A673 (cell line): ENCODE measurements at regions of chr10 and their contacts with region 1.

Region 1: GRCh38 chr10:92880233-92880861 is 32.0 kb downstream of the EXOC6 start:
- DNase-seq: peak; percentile 78
- H3K4me3 ChIP-seq: no peak overlapping the region
- H3K27ac ChIP-seq: no peak overlapping the region
- H3K4me1 ChIP-seq: peaks cover 21% of the 10 kb centered on the region
- H3K27me3 ChIP-seq: no peaks in the 10 kb centered on the region
- CTCF ChIP-seq: peak; percentile 71

Region 2: GRCh38 chr10:92523639-92524038 is 356.7 kb before region 1 on chr10:
- CTCF ChIA-PET with region 1: no interaction called
- POLR2A ChIA-PET with region 1: no interaction called
- intact Hi-C with region 1: loop called (anchors 5 kb)
- DNase-seq: no peak
- H3K4me3 ChIP-seq: no peak overlapping the region
- H3K27ac ChIP-seq: no peak overlapping the region
- H3K4me1 ChIP-seq: no peaks in the 10 kb centered on the region
- H3K27me3 ChIP-seq: no peaks in the 10 kb centered on the region
- CTCF ChIP-seq: no peak

Region 3: GRCh38 chr10:92644921-92645320 is 235.4 kb before region 1 on chr10:
- CTCF ChIA-PET with region 1: no interaction called
- POLR2A ChIA-PET with region 1: no interaction called
- intact Hi-C with region 1: loop called (anchors 5 kb)
- DNase-seq: no peak
- H3K4me3 ChIP-seq: no peak overlapping the region
- H3K27ac ChIP-seq: no peak overlapping the region
- H3K4me1 ChIP-seq: peaks cover 3% of the 10 kb centered on the region
- H3K27me3 ChIP-seq: no peaks in the 10 kb centered on the region
- CTCF ChIP-seq: no peak

Region 4: DNA sequence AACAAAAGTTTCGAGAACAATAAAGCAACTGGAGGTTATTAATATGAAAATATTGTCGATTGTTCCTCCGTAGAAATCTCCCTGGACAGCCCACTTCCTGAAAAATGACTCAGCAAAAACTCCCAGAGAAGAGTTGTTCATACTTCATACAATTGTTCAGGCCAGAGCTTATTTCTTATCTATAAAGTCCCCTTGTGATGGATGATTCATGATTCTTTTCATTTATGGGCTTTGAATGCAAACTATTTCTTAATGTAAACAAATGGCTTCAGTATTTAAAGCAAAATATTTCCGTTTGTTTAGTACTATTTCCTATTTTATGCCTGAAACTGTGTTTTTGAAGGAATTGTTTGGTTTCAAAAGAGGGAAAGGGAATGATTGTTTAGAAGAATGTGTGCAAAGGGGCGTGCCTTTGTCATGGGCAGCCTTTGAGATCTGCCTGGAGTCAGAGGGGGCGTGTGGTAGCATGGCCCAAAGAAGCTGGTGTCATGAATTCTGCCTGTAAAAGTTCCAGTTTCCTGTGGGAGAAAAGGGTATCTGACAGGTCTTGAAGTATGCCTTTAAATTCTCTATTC is 58.2 kb before region 1 on chr10:
- CTCF ChIA-PET with region 1: no interaction called
- POLR2A ChIA-PET with region 1: no interaction called
- intact Hi-C with region 1: loop called (anchors 2 kb)
- DNase-seq: peak; percentile 85
- H3K4me3 ChIP-seq: no peak overlapping the region
- H3K27ac ChIP-seq: peak overlapping the region; percentile 83
- H3K4me1 ChIP-seq: peaks cover 17% of the 10 kb centered on the region
- H3K27me3 ChIP-seq: no peaks in the 10 kb centered on the region
- CTCF ChIP-seq: no peak

Region 5: DNA sequence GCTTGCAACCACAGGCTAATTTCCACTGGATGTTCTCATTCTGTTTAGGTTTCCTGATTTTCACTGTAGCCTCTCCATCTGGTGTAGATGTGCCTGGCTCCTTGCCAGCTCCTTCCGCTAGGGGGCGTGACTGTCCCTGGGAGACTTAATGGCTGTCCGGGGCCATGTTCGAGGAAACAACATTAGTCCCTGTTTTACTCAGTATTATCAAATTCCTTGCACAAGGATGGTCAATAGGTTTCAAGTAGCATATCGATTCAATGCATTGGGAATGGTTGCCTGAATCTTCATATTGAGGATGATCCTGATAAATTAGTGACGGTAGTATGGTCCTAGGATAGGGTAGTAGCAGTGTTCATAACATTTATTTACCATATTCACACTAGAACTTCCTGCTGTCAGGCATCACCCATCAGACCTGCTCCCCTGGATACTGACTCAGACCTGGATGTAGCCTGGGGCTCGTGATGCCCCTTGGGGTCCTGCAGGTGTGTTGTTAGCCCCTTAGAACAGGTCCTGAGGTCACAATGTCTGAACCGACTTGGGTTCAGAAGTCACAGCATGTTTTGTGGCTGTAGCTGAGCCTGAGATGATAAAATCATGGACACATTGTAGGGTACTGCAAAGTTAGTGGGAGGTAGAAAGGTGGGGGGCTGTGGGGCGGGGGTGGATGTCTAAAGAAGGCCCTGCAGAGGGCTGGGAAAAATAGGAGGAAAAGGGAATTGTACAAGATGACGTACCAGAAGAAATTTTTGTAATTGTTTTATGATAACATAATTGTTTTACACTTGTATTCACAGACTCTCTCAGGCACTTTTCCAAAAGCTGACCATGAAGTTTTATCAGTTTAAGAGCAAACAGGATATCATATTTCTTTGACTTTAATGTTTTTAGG is 40.9 kb before region 1 on chr10:
- CTCF ChIA-PET with region 1: interaction called, 7 read pairs
- POLR2A ChIA-PET with region 1: no interaction called
- intact Hi-C with region 1: loop called (anchors 1 kb)
- DNase-seq: peak; percentile 86
- H3K4me3 ChIP-seq: no peak overlapping the region
- H3K27ac ChIP-seq: no peak overlapping the region
- H3K4me1 ChIP-seq: peaks cover 8% of the 10 kb centered on the region
- H3K27me3 ChIP-seq: no peaks in the 10 kb centered on the region
- CTCF ChIP-seq: peak; percentile 70

Region 6: DNA sequence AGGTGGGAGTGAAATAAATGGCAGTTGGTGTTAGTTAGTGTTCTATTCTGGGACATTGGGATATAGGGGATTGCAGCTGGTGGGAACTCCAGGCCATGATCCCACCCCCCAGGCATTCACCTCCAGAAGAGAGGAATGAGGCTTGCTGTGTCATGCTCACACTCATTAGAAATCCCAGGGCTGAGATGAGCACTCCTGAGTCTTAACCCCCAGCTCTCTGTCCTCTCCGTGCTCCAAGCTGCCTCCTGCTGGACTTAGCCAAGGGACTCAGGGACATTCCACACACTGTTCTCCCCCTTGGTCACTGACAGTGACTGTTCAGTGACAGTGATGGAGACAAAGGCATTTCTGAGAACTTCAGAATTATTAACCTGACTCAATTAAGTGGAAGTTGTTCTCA is 214.9 kb after region 1 on chr10:
- CTCF ChIA-PET with region 1: no interaction called
- POLR2A ChIA-PET with region 1: no interaction called
- intact Hi-C with region 1: no loop called
- DNase-seq: no peak
- H3K4me3 ChIP-seq: no peak overlapping the region
- H3K27ac ChIP-seq: no peak overlapping the region
- H3K4me1 ChIP-seq: no peaks in the 10 kb centered on the region
- H3K27me3 ChIP-seq: no peaks in the 10 kb centered on the region
- CTCF ChIP-seq: no peak